Gastrocnemius medialis (tissue), 4 donors: ENCODE measurements at regions of chr1 and their contacts with region 1.

Region 1: DNA sequence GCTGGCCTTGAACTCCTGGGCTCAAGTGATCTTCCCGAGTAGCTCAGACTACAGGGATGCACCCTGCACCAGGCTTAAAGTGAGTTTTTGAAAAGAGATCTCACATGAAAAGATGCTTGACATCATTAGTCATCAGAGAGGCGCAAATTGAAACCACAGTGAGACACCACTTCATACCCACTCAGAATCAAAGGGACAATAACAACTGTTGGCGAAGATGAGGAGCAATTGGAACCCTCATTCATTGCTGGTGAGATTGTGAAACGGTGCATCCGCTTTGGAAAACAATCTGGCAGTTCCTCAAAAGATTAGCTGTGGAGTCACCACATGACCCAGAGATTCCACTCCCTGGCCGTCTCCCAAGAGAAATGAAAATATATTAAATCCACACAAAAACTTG is 122.3 kb downstream of the PGBD5 start:
- DNase-seq: peak; percentile 31 to 34
- ATAC-seq: peak; percentile 82 to 92
- H3K4me3 ChIP-seq: no peak overlapping the region
- H3K27ac ChIP-seq: peak overlapping the region; percentile 41 to 71 (median 58)
- H3K4me1 ChIP-seq: peaks cover 10 to 20% of the 10 kb centered on the region in 2 donors
- H3K27me3 ChIP-seq: no peaks in the 10 kb centered on the region
- CTCF ChIP-seq: no peak
- POLR2A ChIP-seq: no peak

Region 2: GRCh38 chr1:229887043-229887822 is 416.6 kb before region 1 on chr1:
- in situ Hi-C with region 1: no loop called
- intact Hi-C with region 1: loop called (anchors 5 kb)
- DNase-seq: peak; percentile 78 to 88
- ATAC-seq: peak; percentile 84 to 86
- H3K4me3 ChIP-seq: no peak overlapping the region
- H3K27ac ChIP-seq: peak overlapping the region; percentile 84 to 97 (median 95)
- H3K4me1 ChIP-seq: peaks cover 42 to 55% of the 10 kb centered on the region in 2 donors
- H3K27me3 ChIP-seq: no peaks in the 10 kb centered on the region
- CTCF ChIP-seq: no peak
- POLR2A ChIP-seq: no peak

Region 3: DNA sequence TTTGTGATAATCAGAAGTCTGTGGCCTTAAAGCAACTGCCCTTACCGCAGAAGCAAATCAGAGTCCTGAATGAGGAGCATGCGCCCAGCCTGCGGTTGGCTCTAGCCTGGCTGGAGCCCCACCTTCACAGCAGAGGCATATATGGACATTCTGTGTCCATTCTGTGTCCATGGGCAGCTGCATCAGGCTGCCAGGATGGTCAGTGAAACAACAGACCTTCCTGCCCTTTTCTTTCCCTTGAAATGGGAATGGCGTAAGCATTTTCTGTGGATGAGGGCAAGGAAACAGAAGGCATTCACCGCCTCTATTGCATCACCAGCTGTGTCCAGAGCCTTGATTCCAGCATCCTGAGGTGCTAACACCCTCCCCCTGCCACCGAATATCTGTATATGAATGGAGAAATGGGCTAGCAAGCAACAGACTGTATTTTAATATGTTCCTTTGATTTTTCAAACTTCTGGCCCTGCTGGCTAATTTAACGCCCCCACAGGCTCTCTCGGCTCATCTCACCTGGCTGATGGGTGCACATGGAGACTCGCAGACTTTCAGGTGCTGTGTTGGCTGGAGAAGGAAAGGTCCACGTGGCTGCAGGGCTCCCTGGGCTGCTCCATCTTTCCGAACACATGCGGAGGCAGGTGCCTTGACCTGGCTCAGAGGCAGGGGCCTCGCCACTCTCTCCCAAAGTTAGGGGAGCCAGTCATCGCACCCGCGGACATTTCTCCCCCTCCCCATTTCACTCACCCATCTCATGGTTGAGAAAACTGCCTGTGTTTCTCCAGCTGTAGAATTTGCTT is 77.6 kb before region 1 on chr1:
- in situ Hi-C with region 1: no loop called
- intact Hi-C with region 1: loop called (anchors 5 kb)
- DNase-seq: no peak
- ATAC-seq: no peak
- H3K4me3 ChIP-seq: no peak overlapping the region
- H3K27ac ChIP-seq: no peak overlapping the region
- H3K4me1 ChIP-seq: peaks cover 46 to 48% of the 10 kb centered on the region in 2 donors
- H3K27me3 ChIP-seq: no peaks in the 10 kb centered on the region
- CTCF ChIP-seq: no peak
- POLR2A ChIP-seq: no peak